OCI-LY7 (cell line): ENCODE measurements at regions of chr9 and their contacts with region 1.

Region 1: DNA sequence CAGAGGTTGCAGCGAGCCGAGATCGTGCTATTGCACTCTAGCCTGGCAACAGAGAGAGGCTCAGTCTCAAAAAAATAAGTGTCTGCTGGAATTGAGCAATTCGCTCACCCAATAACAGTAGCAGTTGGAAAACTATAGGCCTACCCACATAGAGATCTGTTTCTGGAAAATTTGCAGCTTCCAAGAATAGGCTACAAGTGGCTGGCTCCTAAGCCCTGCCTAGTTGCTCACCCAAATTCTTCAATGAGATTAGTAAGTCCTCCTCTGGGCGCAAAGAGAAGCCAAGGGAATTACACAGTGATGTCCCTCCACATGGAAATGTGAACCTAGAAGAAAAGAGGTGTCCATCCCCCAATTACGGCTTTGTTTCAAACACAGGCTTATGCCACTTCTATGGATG is 42.6 kb upstream of the RNF38 start:
- DNase-seq: no peak
- H3K4me3 ChIP-seq: no peak overlapping the region
- H3K27ac ChIP-seq: no peak overlapping the region
- H3K4me1 ChIP-seq: no peaks in the 10 kb centered on the region
- CTCF ChIP-seq: no peak

Region 2: GRCh38 chr9:36656842-36657241 is 214.1 kb after region 1 on chr9:
- CTCF ChIA-PET with region 1: no interaction called
- POLR2A ChIA-PET with region 1: interaction called, 11 read pairs
- intact Hi-C with region 1: no loop called
- DNase-seq: no peak
- H3K4me3 ChIP-seq: no peak overlapping the region
- H3K27ac ChIP-seq: no peak overlapping the region
- H3K4me1 ChIP-seq: peaks cover 7% of the 10 kb centered on the region
- CTCF ChIP-seq: no peak